Naive thymus-derived CD4-positive, alpha-beta T cell (primary cell): ENCODE measurements at regions of chr12 and their contacts with region 1.

Region 1: GRCh38 chr12:121668750-121669520 is 519 bp downstream of the MORN3 start:
- DNase-seq: peak in 7 of 9 donors; percentile 32 to 66 (median 56)
- ATAC-seq: no peak
- H3K4me3 ChIP-seq: no peak overlapping the region
- H3K4me3 Mint-ChIP-seq: peak overlapping the region in 9 of 10 donors; percentile 34 to 62 (median 54)
- H3K27ac ChIP-seq: peak overlapping the region; percentile 36
- H3K27ac Mint-ChIP-seq: peak overlapping the region; percentile 49 to 93 (median 75)
- H3K4me1 ChIP-seq: peaks cover 16 to 53% of the 10 kb centered on the region in 2 donors
- H3K4me1 Mint-ChIP-seq: peaks cover 44 to 71% (median 57%) of the 10 kb centered on the region in 7 donors
- H3K27me3 ChIP-seq: no peaks in the 10 kb centered on the region
- H3K27me3 Mint-ChIP-seq: no peaks in the 10 kb centered on the region

Region 2: GRCh38 chr12:121351820-121352681 is 316.9 kb before region 1 on chr12 and contains the start of gene ANAPC5:
- CTCF ChIA-PET with region 1: no interaction called
- POLR2A ChIA-PET with region 1: no interaction called
- intact Hi-C with region 1: loop called in 1 of 2 experiments (anchors 5 kb)
- DNase-seq: peak; percentile 61 to 93 (median 89)
- ATAC-seq: peak; percentile 99
- H3K4me3 ChIP-seq: peak within 1 kb of the TSS; percentile 99
- H3K4me3 Mint-ChIP-seq: peak within 1 kb of the TSS; percentile 88 to 100 (median 97)
- H3K27ac ChIP-seq: peak within 1 kb of the TSS; percentile 78
- H3K27ac Mint-ChIP-seq: peak within 1 kb of the TSS; percentile 90 to 100 (median 98)
- H3K4me1 ChIP-seq: peaks cover 6 to 7% of the 10 kb centered on the region in 2 donors
- H3K4me1 Mint-ChIP-seq: peaks cover 25 to 58% (median 42%) of the 10 kb centered on the region in 7 donors
- H3K27me3 ChIP-seq: no peaks in the 10 kb centered on the region
- H3K27me3 Mint-ChIP-seq: peaks cover 0 to 5% (median 0%) of the 10 kb centered on the region in 5 donors
- total RNA-seq, gene ANAPC5: 114 to 148 (median 141) TPM

Region 3: GRCh38 chr12:121550974-121551634 is 117.8 kb before region 1 on chr12:
- CTCF ChIA-PET with region 1: interaction called, 72 read pairs
- POLR2A ChIA-PET with region 1: interaction called, 9 read pairs
- intact Hi-C with region 1: loop called (anchors 1 kb)
- DNase-seq: no peak
- ATAC-seq: no peak
- H3K4me3 ChIP-seq: no peak overlapping the region
- H3K4me3 Mint-ChIP-seq: no peak overlapping the region
- H3K27ac ChIP-seq: no peak overlapping the region
- H3K27ac Mint-ChIP-seq: no peak overlapping the region
- H3K4me1 ChIP-seq: peaks cover 0 to 12% of the 10 kb centered on the region in 2 donors
- H3K4me1 Mint-ChIP-seq: peaks cover 0 to 7% (median 3%) of the 10 kb centered on the region in 7 donors
- H3K27me3 ChIP-seq: no peaks in the 10 kb centered on the region
- H3K27me3 Mint-ChIP-seq: no peaks in the 10 kb centered on the region

Region 4: DNA sequence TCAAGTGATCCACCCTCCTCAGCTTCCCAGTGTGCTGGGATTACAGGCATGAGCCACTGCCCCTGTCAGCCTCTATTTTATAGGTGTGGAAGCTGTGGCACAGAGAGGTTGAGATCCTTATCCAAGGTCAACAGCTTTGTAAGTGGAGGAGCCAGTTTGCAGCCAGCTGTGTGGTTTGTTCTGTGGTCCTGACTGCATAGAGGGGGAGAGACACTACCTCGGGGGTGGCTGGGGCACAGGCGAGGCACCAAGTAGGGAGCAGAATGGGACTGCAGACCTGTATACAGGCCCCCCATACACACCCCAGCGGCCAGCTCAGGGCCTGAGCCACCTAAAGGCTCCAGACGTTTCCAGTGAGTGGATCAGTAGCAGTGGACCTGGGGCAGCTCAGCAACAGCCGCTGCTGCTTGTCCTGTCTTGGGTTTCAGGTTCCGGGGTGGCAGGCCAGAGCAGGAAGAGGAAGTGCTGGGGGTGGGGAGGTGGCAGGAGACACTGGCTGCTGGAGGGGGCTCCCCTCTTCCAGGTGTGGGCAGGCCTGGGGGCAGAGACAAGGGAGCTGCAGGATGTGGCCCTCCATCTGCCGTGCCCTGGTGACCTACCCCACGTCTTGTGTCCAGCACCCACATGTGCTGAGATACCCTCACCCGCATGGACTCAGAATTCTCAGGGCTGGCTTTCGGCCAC is 31.6 kb before region 1 on chr12:
- CTCF ChIA-PET with region 1: interaction called, 150 read pairs
- POLR2A ChIA-PET with region 1: interaction called, 203 read pairs
- intact Hi-C with region 1: no loop called
- DNase-seq: peak in 8 of 9 donors; percentile 38 to 53 (median 46)
- ATAC-seq: peak; percentile 79
- H3K4me3 ChIP-seq: peak overlapping the region; percentile 1
- H3K4me3 Mint-ChIP-seq: peak overlapping the region; percentile 61 to 82 (median 76)
- H3K27ac ChIP-seq: peak overlapping the region; percentile 83
- H3K27ac Mint-ChIP-seq: peak overlapping the region; percentile 82 to 95 (median 92)
- H3K4me1 ChIP-seq: peaks cover 35 to 50% of the 10 kb centered on the region in 2 donors
- H3K4me1 Mint-ChIP-seq: peaks cover 48 to 75% (median 61%) of the 10 kb centered on the region in 7 donors
- H3K27me3 ChIP-seq: no peaks in the 10 kb centered on the region
- H3K27me3 Mint-ChIP-seq: no peaks in the 10 kb centered on the region

Region 5: DNA sequence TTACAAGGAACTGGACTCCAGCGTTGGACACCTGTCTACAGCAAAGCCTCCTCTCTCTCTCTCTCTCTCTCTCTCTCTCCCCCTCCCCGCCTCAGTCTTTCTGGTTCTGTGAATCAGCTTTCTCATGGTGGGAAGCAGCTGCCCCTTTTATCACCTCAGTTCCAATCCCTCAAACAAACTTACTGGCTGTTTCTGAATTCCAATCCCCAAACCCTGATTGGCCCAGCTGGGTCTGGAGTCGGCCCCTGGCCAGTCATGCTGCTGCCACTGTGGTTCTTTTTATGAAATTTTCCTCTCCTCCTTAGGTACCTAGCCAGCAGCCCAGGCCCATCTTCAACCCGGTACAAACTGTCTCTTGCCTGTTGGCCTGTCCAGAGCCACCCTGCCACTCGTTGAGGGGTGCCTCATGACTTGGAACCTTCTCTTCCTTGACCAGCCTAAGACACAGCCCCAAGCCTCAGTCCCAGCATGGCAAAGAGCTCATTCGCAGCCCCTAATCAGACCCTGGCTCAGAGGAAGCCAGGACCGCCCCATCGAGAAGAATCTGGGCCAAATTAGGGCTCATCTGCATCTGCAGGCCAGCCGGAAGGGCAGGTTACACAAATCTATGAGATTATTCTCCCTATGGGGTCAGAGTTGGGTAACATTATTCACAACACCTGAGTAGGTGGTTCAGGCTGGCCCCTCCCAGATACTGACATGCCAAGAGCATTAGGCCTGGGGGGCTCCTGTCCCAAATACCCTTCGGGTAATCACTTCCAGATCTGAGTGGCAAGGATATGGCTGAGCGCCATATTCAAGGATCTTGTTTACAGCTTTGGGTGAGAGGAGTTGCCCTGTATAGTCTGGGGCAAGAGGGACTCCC is 10.0 kb after region 1 on chr12:
- CTCF ChIA-PET with region 1: interaction called, 12 read pairs
- POLR2A ChIA-PET with region 1: interaction called, 16 read pairs
- intact Hi-C with region 1: loop called in 1 of 2 experiments (anchors 1 kb)
- DNase-seq: no peak
- ATAC-seq: no peak
- H3K4me3 ChIP-seq: no peak overlapping the region
- H3K4me3 Mint-ChIP-seq: no peak overlapping the region
- H3K27ac ChIP-seq: no peak overlapping the region
- H3K27ac Mint-ChIP-seq: peak overlapping the region in 3 of 9 donors; percentile 34 to 59 (median 57)
- H3K4me1 ChIP-seq: no peaks in the 10 kb centered on the region
- H3K4me1 Mint-ChIP-seq: peaks cover 4 to 14% (median 6%) of the 10 kb centered on the region in 7 donors
- H3K27me3 ChIP-seq: no peaks in the 10 kb centered on the region
- H3K27me3 Mint-ChIP-seq: no peaks in the 10 kb centered on the region

Region 6: GRCh38 chr12:121793838-121794533 is 125.1 kb after region 1 on chr12:
- CTCF ChIA-PET with region 1: interaction called, 4 read pairs
- POLR2A ChIA-PET with region 1: interaction called, 11 read pairs
- intact Hi-C with region 1: no loop called
- DNase-seq: peak; percentile 91 to 98 (median 95)
- ATAC-seq: peak; percentile 77
- H3K4me3 ChIP-seq: peak overlapping the region; percentile 99
- H3K4me3 Mint-ChIP-seq: peak overlapping the region; percentile 84 to 99 (median 93)
- H3K27ac ChIP-seq: peak overlapping the region; percentile 96
- H3K27ac Mint-ChIP-seq: peak overlapping the region; percentile 85 to 99 (median 95)
- H3K4me1 ChIP-seq: peaks cover 44 to 50% of the 10 kb centered on the region in 2 donors
- H3K4me1 Mint-ChIP-seq: peaks cover 44 to 72% (median 59%) of the 10 kb centered on the region in 7 donors
- H3K27me3 ChIP-seq: no peaks in the 10 kb centered on the region
- H3K27me3 Mint-ChIP-seq: no peaks in the 10 kb centered on the region